Left ventricle myocardium inferior (tissue), 1 donor: ENCODE measurements at regions of chr4 and their contacts with region 1.

Region 1: GRCh38 chr4:73019462-73020047 is 50.0 kb downstream of the COX18 start:
- DNase-seq: no peak
- H3K4me3 ChIP-seq: no peak overlapping the region
- H3K27ac ChIP-seq: no peak overlapping the region
- H3K4me1 ChIP-seq: no peaks in the 10 kb centered on the region
- H3K27me3 ChIP-seq: no peaks in the 10 kb centered on the region
- CTCF ChIP-seq: peak; percentile 75

Region 2: GRCh38 chr4:72505314-72505744 is 514.2 kb before region 1 on chr4:
- intact Hi-C with region 1: loop called (anchors 10 kb)
- DNase-seq: no peak
- H3K4me3 ChIP-seq: no peak overlapping the region
- H3K27ac ChIP-seq: no peak overlapping the region
- H3K4me1 ChIP-seq: no peaks in the 10 kb centered on the region
- H3K27me3 ChIP-seq: peaks cover 6% of the 10 kb centered on the region
- CTCF ChIP-seq: peak; percentile 78

Region 3: DNA sequence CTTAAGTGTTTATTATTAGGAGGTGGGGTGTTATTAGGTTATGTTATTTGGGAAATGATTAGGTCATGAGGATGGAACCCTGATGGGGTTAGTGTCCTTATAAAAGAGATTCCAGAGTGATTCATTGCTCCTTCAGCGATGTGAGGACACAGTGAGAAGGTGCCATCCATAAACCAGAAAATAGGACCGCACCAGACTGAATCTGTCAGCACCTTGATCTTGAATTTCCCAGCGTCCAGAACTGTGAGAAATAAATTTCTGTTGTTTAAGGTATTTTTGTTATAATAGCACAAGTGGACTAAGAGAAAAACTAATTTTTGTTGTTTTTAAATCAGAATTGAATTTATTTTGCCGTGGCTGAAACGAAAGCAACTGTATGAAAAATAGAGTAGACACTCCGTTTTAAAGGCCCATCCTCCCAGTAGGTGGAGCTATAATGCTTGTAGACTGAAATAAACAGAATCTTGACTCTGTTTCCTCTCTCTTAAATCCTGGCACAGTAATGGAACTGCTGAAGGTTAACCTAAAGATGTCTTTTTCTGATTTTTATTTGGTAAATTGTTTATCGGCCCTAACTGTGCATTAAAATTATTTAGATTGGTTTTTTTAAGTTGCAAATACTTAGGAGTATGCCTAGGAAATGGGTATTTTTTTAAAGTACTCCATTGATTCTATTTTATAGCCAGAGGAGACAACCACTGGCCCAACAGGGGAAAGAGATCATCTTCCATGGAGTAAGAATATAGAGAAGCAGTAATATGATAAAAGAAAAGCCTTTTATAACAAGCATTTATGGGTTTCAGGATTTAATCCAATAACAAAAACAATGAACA is 317.4 kb before region 1 on chr4:
- intact Hi-C with region 1: loop called (anchors 5 kb)
- DNase-seq: no peak
- H3K4me3 ChIP-seq: peak overlapping the region; percentile 57
- H3K27ac ChIP-seq: no peak overlapping the region
- H3K4me1 ChIP-seq: no peaks in the 10 kb centered on the region
- H3K27me3 ChIP-seq: no peaks in the 10 kb centered on the region
- CTCF ChIP-seq: peak; percentile 67

Region 4: DNA sequence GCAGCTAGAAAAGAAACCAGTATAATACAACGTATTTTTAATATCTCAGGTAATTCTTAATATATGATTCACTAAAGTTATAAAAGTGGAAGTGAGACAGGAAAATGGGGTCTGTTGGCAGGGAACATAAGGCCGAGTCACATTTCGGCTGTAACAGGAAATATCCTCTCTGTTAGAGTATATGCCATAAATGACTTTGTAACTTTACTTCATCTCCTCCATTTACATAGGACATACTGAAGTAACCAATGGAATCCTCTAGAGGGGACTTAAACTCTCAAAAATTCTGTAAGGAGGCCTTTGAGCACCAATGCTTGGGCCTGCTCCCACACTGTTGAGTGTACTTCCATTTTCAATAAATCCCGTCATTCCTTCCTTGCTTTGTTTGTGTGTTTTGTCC is 167.8 kb after region 1 on chr4:
- intact Hi-C with region 1: no loop called
- DNase-seq: no peak
- H3K4me3 ChIP-seq: no peak overlapping the region
- H3K27ac ChIP-seq: no peak overlapping the region
- H3K4me1 ChIP-seq: peaks cover 21% of the 10 kb centered on the region
- H3K27me3 ChIP-seq: no peaks in the 10 kb centered on the region
- CTCF ChIP-seq: no peak

Region 5: DNA sequence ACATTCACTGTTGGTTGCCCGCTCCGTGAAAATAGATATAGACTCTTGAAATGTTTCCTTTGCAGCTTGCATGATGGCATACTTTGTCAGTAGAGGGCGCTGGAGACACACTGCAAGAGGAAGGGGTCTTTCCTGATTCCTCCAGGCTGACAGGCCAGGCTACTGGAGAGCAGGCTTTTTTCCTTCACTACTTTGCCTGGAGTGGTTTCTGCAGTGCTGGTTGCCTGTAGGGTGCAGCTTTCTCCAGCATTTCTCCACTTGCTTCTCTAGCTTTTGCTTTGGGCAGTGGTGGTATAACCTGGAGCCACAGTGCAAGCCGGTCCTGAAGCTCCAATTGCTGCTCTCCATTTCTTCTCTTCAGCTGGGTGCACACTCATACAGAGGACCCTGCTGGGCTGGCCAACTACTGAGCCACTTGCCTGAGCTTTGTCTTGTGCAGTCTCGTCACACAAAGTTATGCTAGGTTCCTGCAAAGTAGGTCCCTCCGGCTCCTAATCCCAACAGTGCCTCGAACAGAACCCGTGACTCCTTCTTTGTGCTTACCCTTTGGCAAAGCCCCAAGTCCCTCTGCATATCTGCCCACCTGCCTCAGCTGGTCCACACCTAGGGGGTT is 554.3 kb after region 1 on chr4:
- intact Hi-C with region 1: no loop called
- DNase-seq: no peak
- H3K4me3 ChIP-seq: no peak overlapping the region
- H3K27ac ChIP-seq: no peak overlapping the region
- H3K4me1 ChIP-seq: no peaks in the 10 kb centered on the region
- H3K27me3 ChIP-seq: no peaks in the 10 kb centered on the region
- CTCF ChIP-seq: peak; percentile 63